CD4-positive, alpha-beta T cell (primary cell): ENCODE measurements at regions of chr15 and their contacts with region 1.

Region 1: GRCh38 chr15:34259566-34259965 is 34.8 kb downstream of the EMC4 start:
- DNase-seq: no peak
- ATAC-seq: no peak
- H3K4me3 ChIP-seq: no peak overlapping the region
- H3K4me3 Mint-ChIP-seq: no peak overlapping the region
- H3K27ac ChIP-seq: no peak overlapping the region
- H3K27ac Mint-ChIP-seq: no peak overlapping the region
- H3K4me1 ChIP-seq: no peaks in the 10 kb centered on the region
- H3K4me1 Mint-ChIP-seq: peaks cover 5% of the 10 kb centered on the region
- H3K27me3 ChIP-seq: no peaks in the 10 kb centered on the region
- H3K27me3 Mint-ChIP-seq: no peaks in the 10 kb centered on the region
- CTCF ChIP-seq: no peak

Region 2: GRCh38 chr15:33679061-33679460 is 580.5 kb before region 1 on chr15:
- CTCF ChIA-PET with region 1: no interaction called
- POLR2A ChIA-PET with region 1: no interaction called
- intact Hi-C with region 1: no loop called
- DNase-seq: no peak
- ATAC-seq: no peak
- H3K4me3 ChIP-seq: no peak overlapping the region
- H3K4me3 Mint-ChIP-seq: no peak overlapping the region
- H3K27ac ChIP-seq: no peak overlapping the region
- H3K27ac Mint-ChIP-seq: no peak overlapping the region
- H3K4me1 ChIP-seq: no peaks in the 10 kb centered on the region
- H3K4me1 Mint-ChIP-seq: no peaks in the 10 kb centered on the region
- H3K27me3 ChIP-seq: peaks cover 0 to 2% of the 10 kb centered on the region in 2 experiments
- H3K27me3 Mint-ChIP-seq: peaks cover 40% of the 10 kb centered on the region
- CTCF ChIP-seq: no peak

Region 3: DNA sequence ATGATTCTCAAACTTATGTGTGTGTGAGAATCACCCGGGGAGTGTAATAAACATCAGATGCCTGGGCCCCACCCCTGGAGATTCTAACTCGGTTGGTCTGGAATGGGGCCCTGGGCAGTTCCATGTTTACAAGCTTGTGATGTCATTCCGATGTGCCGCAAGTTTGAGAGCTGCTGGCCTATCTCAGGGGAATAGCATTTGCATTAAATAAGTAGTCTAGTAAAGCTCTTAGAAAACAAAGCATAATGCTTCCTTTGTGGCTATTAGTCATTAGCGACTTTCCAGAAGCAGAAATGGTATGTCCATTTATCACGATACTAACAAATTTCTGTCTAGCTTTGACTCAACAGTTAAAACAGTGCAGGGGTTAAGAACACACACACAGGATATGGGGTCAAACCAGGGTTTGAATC is 136.8 kb before region 1 on chr15:
- CTCF ChIA-PET with region 1: no interaction called
- POLR2A ChIA-PET with region 1: no interaction called
- intact Hi-C with region 1: no loop called
- DNase-seq: no peak
- ATAC-seq: no peak
- H3K4me3 ChIP-seq: no peak overlapping the region
- H3K4me3 Mint-ChIP-seq: no peak overlapping the region
- H3K27ac ChIP-seq: no peak overlapping the region
- H3K27ac Mint-ChIP-seq: no peak overlapping the region
- H3K4me1 ChIP-seq: no peaks in the 10 kb centered on the region
- H3K4me1 Mint-ChIP-seq: no peaks in the 10 kb centered on the region
- H3K27me3 ChIP-seq: peaks cover 3 to 4% of the 10 kb centered on the region in 2 experiments
- H3K27me3 Mint-ChIP-seq: peaks cover 21% of the 10 kb centered on the region
- CTCF ChIP-seq: no peak

Region 4: GRCh38 chr15:34161329-34161955 is 98.1 kb before region 1 on chr15:
- CTCF ChIA-PET with region 1: no interaction called
- POLR2A ChIA-PET with region 1: no interaction called
- intact Hi-C with region 1: no loop called
- DNase-seq: no peak
- ATAC-seq: no peak
- H3K4me3 ChIP-seq: no peak overlapping the region
- H3K4me3 Mint-ChIP-seq: no peak overlapping the region
- H3K27ac ChIP-seq: no peak overlapping the region
- H3K27ac Mint-ChIP-seq: no peak overlapping the region
- H3K4me1 ChIP-seq: no peaks in the 10 kb centered on the region
- H3K4me1 Mint-ChIP-seq: no peaks in the 10 kb centered on the region
- H3K27me3 ChIP-seq: no peaks in the 10 kb centered on the region
- H3K27me3 Mint-ChIP-seq: no peaks in the 10 kb centered on the region
- CTCF ChIP-seq: no peak

Region 5: DNA sequence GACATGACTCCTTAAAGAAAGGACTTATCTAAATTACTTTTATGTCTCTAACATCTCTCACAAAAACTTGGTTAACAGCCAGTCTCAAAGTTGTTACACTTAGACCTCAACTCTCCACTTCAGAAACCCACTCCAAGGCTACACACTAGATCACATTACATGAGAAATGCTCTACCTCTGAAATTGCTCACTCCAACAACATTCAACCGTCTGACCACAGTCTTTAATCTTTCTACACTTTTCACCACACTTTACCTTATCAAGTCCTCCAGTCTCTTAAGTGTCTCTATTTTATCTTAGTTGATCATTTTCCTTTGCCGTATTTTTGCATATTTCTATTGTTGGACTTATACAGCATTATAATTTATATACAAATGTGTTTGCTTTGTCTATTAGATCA is 72.2 kb after region 1 on chr15:
- CTCF ChIA-PET with region 1: no interaction called
- POLR2A ChIA-PET with region 1: interaction called, 3 read pairs
- intact Hi-C with region 1: loop called in 1 of 2 experiments (anchors 5 kb)
- DNase-seq: peak in 3 of 14 experiments; percentile 43 to 62 (median 49)
- ATAC-seq: peak; percentile 40
- H3K4me3 ChIP-seq: no peak overlapping the region
- H3K4me3 Mint-ChIP-seq: peak overlapping the region; percentile 40
- H3K27ac ChIP-seq: peak overlapping the region; percentile 18 to 39
- H3K27ac Mint-ChIP-seq: peak overlapping the region; percentile 98
- H3K4me1 ChIP-seq: peaks cover 55% of the 10 kb centered on the region
- H3K4me1 Mint-ChIP-seq: peaks cover 87% of the 10 kb centered on the region
- H3K27me3 ChIP-seq: no peaks in the 10 kb centered on the region
- H3K27me3 Mint-ChIP-seq: no peaks in the 10 kb centered on the region
- CTCF ChIP-seq: no peak

Region 6: GRCh38 chr15:35834216-35834830 is 1574.8 kb after region 1 on chr15:
- CTCF ChIA-PET with region 1: no interaction called
- POLR2A ChIA-PET with region 1: no interaction called
- intact Hi-C with region 1: no loop called
- DNase-seq: no peak
- ATAC-seq: no peak
- H3K4me3 ChIP-seq: no peak overlapping the region
- H3K4me3 Mint-ChIP-seq: no peak overlapping the region
- H3K27ac ChIP-seq: no peak overlapping the region
- H3K27ac Mint-ChIP-seq: no peak overlapping the region
- H3K4me1 ChIP-seq: no peaks in the 10 kb centered on the region
- H3K4me1 Mint-ChIP-seq: no peaks in the 10 kb centered on the region
- H3K27me3 ChIP-seq: no peaks in the 10 kb centered on the region
- H3K27me3 Mint-ChIP-seq: no peaks in the 10 kb centered on the region
- CTCF ChIP-seq: no peak